Activated B cell treated with CpG ODN at 0.5 μM for 24 hours (primary cell): ENCODE measurements at regions of chr1 and their contacts with region 1.

Region 1: DNA sequence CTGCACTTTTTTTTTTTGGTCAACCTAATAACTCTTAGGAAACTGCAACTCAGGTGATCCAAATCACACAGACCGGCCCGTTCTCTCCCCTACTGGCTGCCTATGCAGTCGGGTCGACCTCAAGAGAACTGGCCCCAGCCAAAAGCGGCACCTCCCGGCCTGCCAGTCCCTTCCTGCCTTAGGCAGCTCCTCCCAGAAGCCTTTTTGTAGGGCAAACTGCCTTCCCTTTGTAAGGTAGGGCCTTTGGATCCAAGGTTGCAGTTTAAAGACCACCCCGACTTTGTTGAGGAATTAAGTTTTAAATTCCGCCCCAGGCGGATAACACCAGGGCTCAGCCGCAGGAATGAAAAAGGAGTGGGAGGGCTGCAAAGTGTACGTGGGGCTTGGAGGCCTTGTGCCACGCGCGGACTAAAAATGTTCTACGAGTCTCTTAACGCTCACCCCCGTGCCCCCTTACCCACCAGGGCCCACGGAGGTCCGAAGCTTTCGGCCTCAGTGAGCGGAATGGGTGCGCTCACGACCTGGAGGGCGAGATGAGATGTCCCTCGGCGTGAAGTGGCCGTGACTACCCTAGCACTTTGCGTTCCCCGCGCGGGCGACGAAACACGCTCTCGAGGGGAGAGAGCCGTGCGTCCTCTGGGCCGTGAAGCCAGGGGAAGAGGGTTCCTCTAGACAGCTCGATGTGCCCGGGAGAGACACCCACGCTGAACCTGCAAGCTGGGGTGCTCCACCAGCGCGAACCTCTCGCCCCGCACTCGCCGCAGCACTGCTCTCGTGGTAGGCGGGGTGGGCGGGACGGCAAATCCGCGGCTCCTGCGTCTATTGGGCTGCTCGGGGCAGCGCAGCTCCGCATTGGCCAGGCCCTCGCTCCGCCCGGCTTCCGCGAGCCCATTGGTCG is 489 bp upstream of the ST3GAL3 start:
- DNase-seq: no peak
- ATAC-seq: peak; percentile 97
- H3K4me3 Mint-ChIP-seq: peak overlapping the region; percentile 86
- H3K27ac Mint-ChIP-seq: peak overlapping the region; percentile 63
- H3K4me1 Mint-ChIP-seq: peaks cover 33% of the 10 kb centered on the region
- H3K27me3 Mint-ChIP-seq: no peaks in the 10 kb centered on the region
- CTCF ChIP-seq: no peak

Region 2: DNA sequence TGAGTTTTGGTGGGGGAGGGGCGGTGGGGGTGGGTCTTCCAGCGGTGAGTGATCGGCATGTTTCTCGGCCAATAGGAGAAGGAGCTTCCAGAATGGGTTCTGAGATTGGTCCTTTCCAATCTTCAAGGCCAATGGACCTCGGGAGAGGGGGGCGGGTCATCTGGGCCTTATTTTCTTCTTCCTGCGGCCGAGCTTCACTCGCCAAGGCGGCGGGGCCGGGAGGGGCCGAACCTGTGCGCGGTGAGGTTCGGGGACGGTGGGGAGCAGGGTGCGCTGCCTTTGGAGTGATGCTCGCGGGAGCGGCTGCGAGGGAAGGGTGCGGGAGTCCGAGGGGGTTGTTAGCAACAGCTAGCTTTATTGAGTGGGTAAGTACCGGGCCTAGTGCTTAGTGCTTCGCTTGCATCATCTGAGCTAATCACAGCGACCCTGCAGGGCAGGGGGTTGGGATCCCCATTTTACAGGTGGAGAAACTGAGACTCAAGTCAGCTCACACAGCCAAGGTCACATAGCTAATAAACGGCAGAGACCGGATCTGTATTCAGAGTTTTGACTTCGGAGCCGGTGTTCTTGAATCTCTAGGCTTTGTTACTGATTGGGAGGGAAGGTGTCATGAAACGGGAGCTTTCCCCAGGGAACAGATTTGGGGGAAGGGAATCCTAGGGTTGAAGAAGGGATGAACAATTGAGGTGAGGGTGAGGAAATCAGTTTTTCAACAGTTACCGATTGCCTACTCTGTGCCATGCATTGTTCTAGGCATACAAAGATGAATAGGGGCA is 56.3 kb before region 1 on chr1:
- CTCF ChIA-PET with region 1: no interaction called
- POLR2A ChIA-PET with region 1: interaction called, 28 read pairs
- intact Hi-C with region 1: loop called (anchors 2 kb)
- DNase-seq: peak; percentile 82
- ATAC-seq: peak; percentile 75
- H3K4me3 Mint-ChIP-seq: peak overlapping the region; percentile 98
- H3K27ac Mint-ChIP-seq: peak overlapping the region; percentile 97
- H3K4me1 Mint-ChIP-seq: peaks cover 46% of the 10 kb centered on the region
- H3K27me3 Mint-ChIP-seq: peaks cover 2% of the 10 kb centered on the region
- CTCF ChIP-seq: no peak